ENCODE measurements at regions of chr5 and their contacts with region 1.

Region 1: DNA sequence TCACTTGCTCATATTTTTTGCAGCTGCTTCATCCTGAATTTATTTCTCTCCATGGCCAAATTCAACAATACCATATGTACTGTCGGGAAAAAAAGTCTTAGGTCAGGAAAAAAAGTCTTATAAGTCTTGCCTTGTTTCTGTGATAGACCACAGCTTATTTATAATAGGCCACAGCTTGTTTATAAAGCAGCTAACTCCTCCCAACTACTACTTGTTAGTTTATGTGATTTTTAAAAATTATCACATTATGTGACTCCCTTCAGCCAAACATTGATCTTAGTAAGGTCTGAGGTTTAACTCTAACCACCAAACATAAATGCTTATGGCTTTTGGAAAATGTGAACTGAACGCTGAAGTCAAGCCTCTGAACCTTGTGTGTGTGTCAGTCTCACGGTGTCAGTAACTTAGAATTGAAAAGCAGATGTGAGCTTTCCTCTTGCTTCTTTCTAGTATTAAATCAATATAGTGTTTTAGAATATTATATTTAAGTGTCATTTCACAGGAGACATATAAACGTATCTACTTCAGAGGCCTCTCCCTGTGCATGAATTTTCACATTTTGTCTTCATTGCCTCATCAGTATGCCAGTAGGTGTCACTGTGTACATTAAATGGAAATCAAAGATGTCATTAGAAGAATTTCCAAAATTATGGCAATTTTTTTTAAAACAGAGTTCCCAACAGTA is 51.3 kb downstream of the SNX24 start:
- DNase-seq: peak; percentile 54
- H3K4me3 Mint-ChIP-seq: no peak overlapping the region
- H3K27ac Mint-ChIP-seq: no peak overlapping the region
- H3K4me1 Mint-ChIP-seq: peaks cover 4% of the 10 kb centered on the region
- H3K27me3 Mint-ChIP-seq: no peaks in the 10 kb centered on the region
- CTCF ChIP-seq: peak; percentile 71

Region 2: DNA sequence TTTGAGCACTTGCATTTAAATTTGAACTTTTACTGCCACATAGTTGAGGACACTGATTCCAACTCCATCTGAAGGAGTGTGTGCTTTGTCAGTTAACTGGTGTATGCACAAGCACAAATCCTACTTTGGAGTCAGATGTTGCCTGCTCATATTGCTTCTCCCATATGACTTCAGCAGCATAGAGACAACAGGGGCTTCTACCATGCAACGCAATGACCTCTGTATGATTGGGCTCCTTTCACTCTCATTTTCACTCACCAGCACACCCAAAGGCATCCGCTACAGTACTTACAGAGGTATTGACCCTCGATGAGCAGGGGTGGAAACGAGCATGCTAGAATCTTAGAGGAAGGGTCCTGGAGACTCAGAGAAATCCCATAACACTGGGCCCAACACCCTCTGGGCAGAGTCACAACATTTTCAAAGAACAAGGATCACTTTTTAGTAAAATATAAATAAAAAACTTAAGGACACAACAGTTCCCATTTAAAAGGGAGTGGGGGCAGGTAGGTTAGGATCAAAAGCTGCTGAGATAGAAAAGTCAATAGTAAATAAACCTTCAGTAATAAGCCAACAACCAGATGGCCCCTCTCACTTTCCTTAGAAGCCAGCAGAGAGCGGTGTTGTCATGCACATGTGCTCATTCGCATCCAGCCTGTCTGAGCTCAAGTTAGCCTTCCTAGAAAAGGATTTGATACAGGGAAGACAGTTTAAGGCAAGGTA is 380.9 kb before region 1 on chr5:
- CTCF ChIA-PET with region 1: interaction called, 5 read pairs
- POLR2A ChIA-PET with region 1: no interaction called
- intact Hi-C with region 1: loop called (anchors 5 kb)
- DNase-seq: peak; percentile 89
- H3K4me3 Mint-ChIP-seq: no peak overlapping the region
- H3K27ac Mint-ChIP-seq: no peak overlapping the region
- H3K4me1 Mint-ChIP-seq: no peaks in the 10 kb centered on the region
- H3K27me3 Mint-ChIP-seq: no peaks in the 10 kb centered on the region
- CTCF ChIP-seq: peak; percentile 94

Region 3: GRCh38 chr5:122907238-122907637 is 10.5 kb after region 1 on chr5:
- CTCF ChIA-PET with region 1: interaction called, 12 read pairs
- POLR2A ChIA-PET with region 1: interaction called, 4 read pairs
- intact Hi-C with region 1: no loop called
- DNase-seq: peak; percentile 66
- H3K4me3 Mint-ChIP-seq: peak overlapping the region; percentile 44
- H3K27ac Mint-ChIP-seq: peak overlapping the region; percentile 76
- H3K4me1 Mint-ChIP-seq: peaks cover 41% of the 10 kb centered on the region
- H3K27me3 Mint-ChIP-seq: no peaks in the 10 kb centered on the region
- CTCF ChIP-seq: no peak

Region 4: GRCh38 chr5:122999945-123000563 is 103.3 kb after region 1 on chr5:
- CTCF ChIA-PET with region 1: interaction called, 5 read pairs
- POLR2A ChIA-PET with region 1: no interaction called
- intact Hi-C with region 1: loop called (anchors 1 kb)
- DNase-seq: peak; percentile 75
- H3K4me3 Mint-ChIP-seq: no peak overlapping the region
- H3K27ac Mint-ChIP-seq: no peak overlapping the region
- H3K4me1 Mint-ChIP-seq: no peaks in the 10 kb centered on the region
- H3K27me3 Mint-ChIP-seq: no peaks in the 10 kb centered on the region
- CTCF ChIP-seq: peak; percentile 74

Region 5: DNA sequence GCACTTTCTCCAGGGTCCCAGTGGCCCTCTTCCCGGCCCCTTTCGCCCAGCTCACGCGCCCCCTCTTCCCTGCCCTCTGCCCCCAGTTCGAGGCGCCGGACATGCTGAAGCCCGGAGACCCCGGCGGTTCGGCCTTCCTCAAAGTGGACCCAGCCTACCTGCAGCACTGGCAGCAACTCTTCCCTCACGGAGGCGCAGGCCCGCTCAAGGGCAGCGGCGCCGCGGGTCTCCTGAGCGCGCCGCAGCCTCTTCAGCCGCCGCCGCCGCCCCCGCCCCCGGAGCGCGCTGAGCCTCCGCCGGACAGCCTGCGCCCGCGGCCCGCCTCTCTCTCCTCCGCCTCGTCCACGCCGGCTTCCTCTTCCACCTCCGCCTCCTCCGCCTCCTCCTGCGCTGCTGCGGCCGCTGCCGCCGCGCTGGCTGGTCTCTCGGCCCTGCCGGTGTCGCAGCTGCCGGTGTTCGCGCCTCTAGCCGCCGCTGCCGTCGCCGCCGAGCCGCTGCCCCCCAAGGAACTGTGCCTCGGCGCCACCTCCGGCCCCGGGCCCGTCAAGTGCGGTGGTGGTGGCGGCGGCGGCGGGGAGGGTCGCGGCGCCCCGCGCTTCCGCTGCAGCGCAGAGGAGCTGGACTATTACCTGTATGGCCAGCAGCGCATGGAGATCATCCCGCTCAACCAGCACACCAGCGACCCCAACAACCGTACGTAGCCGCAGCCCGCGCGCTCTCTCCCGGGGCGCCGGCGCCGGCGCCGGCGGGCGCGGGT is 193.4 kb after region 1 on chr5:
- CTCF ChIA-PET with region 1: no interaction called
- POLR2A ChIA-PET with region 1: no interaction called
- intact Hi-C with region 1: loop called (anchors 10 kb)
- DNase-seq: peak; percentile 53
- H3K4me3 Mint-ChIP-seq: peak overlapping the region; percentile 72
- H3K27ac Mint-ChIP-seq: no peak overlapping the region
- H3K4me1 Mint-ChIP-seq: peaks cover 7% of the 10 kb centered on the region
- H3K27me3 Mint-ChIP-seq: peaks cover 86% of the 10 kb centered on the region
- CTCF ChIP-seq: no peak

Region 6: DNA sequence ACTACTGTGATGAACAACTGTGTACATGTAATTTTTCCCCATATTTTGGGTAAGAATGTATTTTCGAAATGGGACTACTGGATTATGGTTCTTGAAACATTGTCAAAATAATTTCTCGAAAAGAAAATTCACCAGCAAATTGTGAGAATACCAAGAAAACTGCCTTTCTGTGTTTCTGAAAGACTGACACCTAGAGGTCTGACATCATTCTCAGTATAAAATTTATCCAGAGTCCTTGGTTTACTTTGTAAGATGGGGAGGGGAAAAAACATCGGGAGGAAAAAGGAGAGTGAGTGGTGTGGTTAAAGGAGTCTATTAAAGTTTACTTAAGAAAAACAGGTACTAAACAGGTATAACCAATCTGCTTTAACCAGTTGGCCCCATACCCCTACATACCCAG is 377.2 kb after region 1 on chr5:
- CTCF ChIA-PET with region 1: no interaction called
- POLR2A ChIA-PET with region 1: no interaction called
- intact Hi-C with region 1: loop called (anchors 5 kb)
- DNase-seq: no peak
- H3K4me3 Mint-ChIP-seq: no peak overlapping the region
- H3K27ac Mint-ChIP-seq: no peak overlapping the region
- H3K4me1 Mint-ChIP-seq: peaks cover 5% of the 10 kb centered on the region
- H3K27me3 Mint-ChIP-seq: no peaks in the 10 kb centered on the region
- CTCF ChIP-seq: peak; percentile 29

Region 7: GRCh38 chr5:123371575-123372179 is 474.9 kb after region 1 on chr5:
- CTCF ChIA-PET with region 1: interaction called, 22 read pairs
- POLR2A ChIA-PET with region 1: no interaction called
- intact Hi-C with region 1: loop called (anchors 2 kb)
- DNase-seq: peak; percentile 72
- H3K4me3 Mint-ChIP-seq: no peak overlapping the region
- H3K27ac Mint-ChIP-seq: no peak overlapping the region
- H3K4me1 Mint-ChIP-seq: no peaks in the 10 kb centered on the region
- H3K27me3 Mint-ChIP-seq: no peaks in the 10 kb centered on the region
- CTCF ChIP-seq: peak; percentile 49

Measured in MCF 10A (cell line).